ENCODE measurements at regions of chr14 and their contacts with region 1.

Region 1: DNA sequence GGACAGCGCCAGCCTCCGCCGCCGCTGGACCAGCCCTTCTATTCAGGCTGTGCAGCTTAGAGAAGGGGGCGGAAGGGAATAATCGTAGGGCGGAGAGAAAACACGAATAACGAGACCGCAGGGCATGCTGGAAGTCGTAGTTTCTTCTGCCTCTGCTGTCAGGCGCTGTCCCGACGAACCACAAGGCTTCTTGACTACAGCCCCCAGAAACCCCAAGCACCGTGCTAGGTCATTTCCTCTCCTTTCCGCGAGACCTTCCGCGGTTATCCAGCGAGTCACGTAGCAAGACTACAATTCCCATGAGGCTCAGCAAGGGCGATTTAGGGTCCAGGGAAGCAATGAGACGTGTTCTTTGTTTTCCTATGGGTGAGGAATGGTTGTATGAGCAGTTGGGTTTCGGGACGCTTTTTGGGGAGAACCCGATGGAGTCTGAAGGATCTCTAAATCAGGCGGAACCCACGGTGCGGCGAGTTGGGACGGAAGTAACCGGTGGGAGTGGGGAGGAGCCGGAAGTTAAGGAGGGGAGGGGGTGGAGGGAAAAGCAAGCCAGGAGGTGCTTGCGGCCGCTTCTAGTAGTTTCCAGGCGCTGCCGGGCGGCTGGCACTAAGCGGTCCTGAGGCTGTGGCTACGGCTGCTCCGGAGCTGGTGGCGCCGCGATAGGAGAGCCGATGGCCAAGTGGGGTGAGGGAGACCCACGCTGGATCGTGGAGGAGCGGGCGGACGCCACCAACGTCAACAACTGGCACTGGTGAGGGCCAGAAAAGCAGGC is at the starts of genes AHSA1 and VIPAS39:
- DNase-seq: peak; percentile 93 to 97 (median 97)
- ATAC-seq: peak; percentile 98 to 99 (median 98)
- H3K4me3 ChIP-seq: peak within 1 kb of the TSS; percentile 70 to 98 (median 92)
- H3K27ac ChIP-seq: peak within 1 kb of the TSS; percentile 87 to 97 (median 95)
- H3K4me1 ChIP-seq: peaks cover 2 to 30% (median 21%) of the 10 kb centered on the region in 12 donors
- H3K27me3 ChIP-seq: no peaks in the 10 kb centered on the region
- CTCF ChIP-seq: no peak
- POLR2A ChIP-seq: peak in 1 of 2 donors; percentile 71
- total RNA-seq, gene AHSA1: 112 to 210 (median 152) TPM
- total RNA-seq, gene VIPAS39: 9.7 to 18.4 (median 14.4) TPM

Region 2: DNA sequence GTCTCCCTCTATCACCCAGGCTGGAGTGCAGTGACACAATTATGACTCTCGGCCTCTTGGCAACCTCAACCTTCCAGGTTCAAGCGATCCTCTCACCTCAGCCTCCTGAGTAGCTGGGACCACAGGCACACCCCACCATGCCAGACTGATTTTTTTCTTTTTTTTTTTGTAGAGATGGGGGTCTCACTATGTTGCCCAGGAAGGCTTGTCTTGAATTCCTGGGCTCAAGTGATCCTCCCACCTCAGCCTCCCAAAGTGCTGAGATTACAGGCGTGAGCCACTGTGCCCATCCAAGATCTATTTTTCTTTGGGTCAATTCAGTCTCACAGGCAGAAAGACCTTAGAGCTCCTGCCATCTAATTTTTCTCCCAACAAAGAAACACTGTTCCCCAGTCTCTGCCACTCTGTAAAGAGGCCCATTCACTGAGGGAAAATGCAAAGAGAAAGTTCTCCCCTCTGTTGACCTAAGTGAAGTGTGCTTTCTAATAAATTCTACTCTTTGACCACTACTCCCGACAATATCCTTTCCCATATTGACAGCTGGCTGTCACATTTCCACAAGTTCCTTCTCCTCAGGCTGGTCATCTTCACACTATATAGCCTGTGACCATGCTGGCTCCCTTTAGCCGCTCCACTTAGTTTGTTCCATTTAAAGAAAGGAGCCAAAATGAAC is 104.1 kb before region 1 on chr14:
- intact Hi-C with region 1: no loop called
- DNase-seq: no peak
- ATAC-seq: no peak
- H3K4me3 ChIP-seq: no peak overlapping the region
- H3K27ac ChIP-seq: no peak overlapping the region
- H3K4me1 ChIP-seq: no peaks in the 10 kb centered on the region
- H3K27me3 ChIP-seq: no peaks in the 10 kb centered on the region
- CTCF ChIP-seq: no peak
- POLR2A ChIP-seq: no peak

Region 3: GRCh38 chr14:77376771-77377501 is 80.8 kb before region 1 on chr14 and contains the starts of genes SAMD15 and TMED8:
- intact Hi-C with region 1: loop called in 5 of 10 experiments (anchors 2 to 5 kb)
- DNase-seq: peak; percentile 81 to 93 (median 87)
- ATAC-seq: peak; percentile 87 to 99 (median 99)
- H3K4me3 ChIP-seq: peak within 1 kb of the TSS; percentile 69 to 88 (median 82)
- H3K27ac ChIP-seq: peak within 1 kb of the TSS; percentile 41 to 89 (median 83)
- H3K4me1 ChIP-seq: peaks cover 0 to 31% (median 14%) of the 10 kb centered on the region in 12 donors
- H3K27me3 ChIP-seq: no peaks in the 10 kb centered on the region
- CTCF ChIP-seq: peak in 9 of 12 donors; percentile 21 to 55 (median 35)
- POLR2A ChIP-seq: peak in 1 of 2 donors; percentile 44
- total RNA-seq, gene SAMD15: 0.35 to 1.2 TPM in 2 of 9 donors, not detected in the others
- total RNA-seq, gene TMED8: 5.2 to 9.5 (median 7.8) TPM

Region 4: DNA sequence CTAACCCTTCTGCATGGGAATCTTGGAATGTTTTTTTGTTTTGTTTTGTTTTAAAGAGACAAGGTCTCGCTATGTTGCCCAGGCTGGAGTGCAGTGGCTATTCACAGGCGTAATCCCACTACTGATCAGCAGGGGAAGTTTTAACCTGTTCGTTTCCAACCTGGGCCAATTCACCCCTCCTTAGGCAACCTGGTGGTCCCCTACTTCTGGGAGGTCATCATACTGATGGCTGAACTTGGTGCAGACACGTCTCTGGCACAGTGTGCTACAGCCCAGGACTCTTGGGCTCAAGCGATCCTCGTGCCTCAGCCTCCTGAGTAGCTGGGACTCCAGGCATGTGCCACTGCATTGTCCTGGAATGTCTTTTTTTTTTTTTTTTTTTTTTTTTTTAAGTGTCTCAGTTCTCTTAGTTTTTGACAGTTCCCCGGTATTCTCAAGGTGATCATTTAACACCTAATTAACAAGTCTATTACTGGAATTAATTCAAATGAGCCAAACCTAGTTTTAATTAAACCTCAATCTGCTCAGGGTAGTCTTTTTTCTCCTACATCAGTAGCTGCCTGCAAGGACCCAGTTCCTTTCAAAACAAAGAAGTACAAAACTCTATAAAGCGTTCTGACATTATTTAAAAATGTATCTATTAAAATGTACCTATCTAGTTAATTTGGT is 89.9 kb after region 1 on chr14:
- intact Hi-C with region 1: loop called in 7 of 10 experiments (anchors 5 to 10 kb)
- DNase-seq: no peak
- ATAC-seq: no peak
- H3K4me3 ChIP-seq: no peak overlapping the region
- H3K27ac ChIP-seq: no peak overlapping the region
- H3K4me1 ChIP-seq: peaks cover 0 to 16% (median 2%) of the 10 kb centered on the region in 12 donors
- H3K27me3 ChIP-seq: no peaks in the 10 kb centered on the region
- CTCF ChIP-seq: no peak
- POLR2A ChIP-seq: no peak

Region 5: GRCh38 chr14:77616454-77617229 is 158.9 kb after region 1 on chr14 and contains the start of gene SPTLC2:
- intact Hi-C with region 1: loop called in 1 of 10 experiments (anchors 5 kb)
- DNase-seq: peak; percentile 99 to 100 (median 99)
- ATAC-seq: peak; percentile 99 to 100 (median 99)
- H3K4me3 ChIP-seq: peak within 1 kb of the TSS; percentile 78 to 94 (median 90)
- H3K27ac ChIP-seq: peak within 1 kb of the TSS; percentile 76 to 91 (median 86)
- H3K4me1 ChIP-seq: peaks cover 0 to 48% (median 13%) of the 10 kb centered on the region in 12 donors
- H3K27me3 ChIP-seq: no peaks in the 10 kb centered on the region
- CTCF ChIP-seq: peak in 4 of 12 donors; percentile 9 to 34 (median 24)
- POLR2A ChIP-seq: peak in 1 of 2 donors; percentile 82
- total RNA-seq, gene SPTLC2: 8.2 to 25.2 (median 11.2) TPM

Measured in heart left ventricle (tissue), 16 donors.